T-cell (primary cell): ENCODE measurements at regions of chr6 and their contacts with region 1.

Region 1: DNA sequence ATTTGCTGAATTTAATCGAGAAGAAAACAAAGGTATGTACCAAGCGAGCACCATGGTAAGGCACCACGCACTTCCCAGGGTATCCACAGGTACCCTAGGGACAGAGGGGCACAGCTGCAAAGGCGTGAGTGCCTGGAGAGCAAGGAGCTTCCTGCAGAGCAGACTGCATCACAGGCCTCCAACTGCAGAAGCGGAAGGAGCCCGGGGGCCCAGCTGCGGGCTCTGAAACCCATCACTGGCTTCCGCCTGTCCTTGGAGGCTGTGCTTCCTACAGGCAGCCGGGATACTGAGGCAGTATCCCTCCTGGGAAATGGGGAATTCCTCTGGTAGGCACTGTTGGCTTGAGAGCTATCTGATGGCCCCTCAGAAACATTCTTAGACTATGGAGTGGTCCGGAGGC is 217.4 kb upstream of the GMDS start:
- DNase-seq: no peak
- ATAC-seq: no peak
- H3K4me3 ChIP-seq: no peak overlapping the region
- H3K4me3 Mint-ChIP-seq: no peak overlapping the region
- H3K27ac ChIP-seq: no peak overlapping the region
- H3K27ac Mint-ChIP-seq: no peak overlapping the region
- H3K4me1 ChIP-seq: no peaks in the 10 kb centered on the region
- H3K4me1 Mint-ChIP-seq: no peaks in the 10 kb centered on the region
- H3K27me3 ChIP-seq: peaks cover 0 to 11% of the 10 kb centered on the region in 2 experiments
- H3K27me3 Mint-ChIP-seq: peaks cover 15 to 22% of the 10 kb centered on the region in 2 donors

Region 2: DNA sequence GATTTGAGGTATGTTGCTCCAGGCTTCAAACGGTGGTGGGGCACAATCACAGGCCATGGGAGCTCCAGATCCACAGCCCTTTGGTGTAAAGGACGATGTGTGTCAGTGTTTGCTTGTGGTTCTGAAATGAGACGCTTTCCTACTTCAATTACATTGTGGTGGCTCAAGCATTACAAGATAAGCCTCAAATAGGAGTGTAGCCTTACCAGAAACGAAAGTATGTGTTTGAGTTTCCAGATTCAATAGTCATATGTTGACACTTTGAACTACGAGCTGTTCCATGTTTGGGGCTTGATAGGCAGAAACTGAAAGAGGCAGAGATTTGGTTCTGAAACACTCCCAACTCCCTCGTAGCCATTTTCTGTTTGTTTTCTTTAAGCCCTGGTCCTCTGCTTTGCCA is 100.8 kb after region 1 on chr6:
- CTCF ChIA-PET with region 1: interaction called in 1 of 2 experiments, 13 read pairs
- POLR2A ChIA-PET with region 1: no interaction called
- DNase-seq: no peak
- ATAC-seq: no peak
- H3K4me3 ChIP-seq: no peak overlapping the region
- H3K4me3 Mint-ChIP-seq: no peak overlapping the region
- H3K27ac ChIP-seq: no peak overlapping the region
- H3K27ac Mint-ChIP-seq: no peak overlapping the region
- H3K4me1 ChIP-seq: no peaks in the 10 kb centered on the region
- H3K4me1 Mint-ChIP-seq: peaks cover 0 to 11% (median 6%) of the 10 kb centered on the region in 3 donors
- H3K27me3 ChIP-seq: peaks cover 0 to 6% of the 10 kb centered on the region in 2 experiments
- H3K27me3 Mint-ChIP-seq: peaks cover 4 to 15% of the 10 kb centered on the region in 2 donors